Endothelial cell of umbilical vein (primary cell): ENCODE measurements at regions of chr17 and their contacts with region 1.

Region 1: DNA sequence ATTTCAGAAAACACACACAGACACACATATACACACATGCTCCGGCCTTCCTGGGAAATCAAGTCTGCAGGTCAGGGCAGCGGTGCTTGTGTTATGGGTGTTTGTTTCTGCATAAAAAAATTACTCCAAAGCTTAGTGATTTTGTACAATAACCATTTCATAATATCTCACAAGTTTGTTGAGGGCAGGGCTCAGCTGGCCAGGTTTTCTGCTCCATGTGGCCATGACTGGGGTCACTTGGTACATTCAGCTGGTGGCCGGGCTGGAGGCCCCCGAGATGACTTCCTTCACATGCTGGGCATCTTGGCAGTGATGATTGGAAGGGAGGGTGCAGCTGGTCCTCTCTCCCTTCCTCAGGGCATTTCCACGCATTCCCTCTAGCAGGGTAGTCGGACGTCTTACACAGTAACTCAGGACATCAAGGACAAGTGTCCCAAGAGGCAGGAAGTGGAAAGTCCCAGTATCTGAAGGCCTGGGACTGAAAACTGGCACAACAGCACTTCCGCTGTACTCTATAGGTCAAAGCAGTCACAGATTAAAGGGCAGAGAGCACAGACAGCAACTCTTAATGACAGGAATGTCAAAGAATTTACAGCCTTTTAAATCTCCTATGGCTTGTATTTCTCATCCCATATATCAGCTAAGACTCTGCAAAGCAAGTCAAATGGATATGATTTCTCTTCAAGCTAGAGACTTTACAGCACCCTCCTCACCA is 127.4 kb downstream of the ZNF18 start:
- DNase-seq: no peak
- H3K4me3 ChIP-seq: no peak overlapping the region
- H3K27ac ChIP-seq: no peak overlapping the region
- H3K4me1 ChIP-seq: no peaks in the 10 kb centered on the region
- H3K27me3 ChIP-seq: no peaks in the 10 kb centered on the region
- CTCF ChIP-seq: no peak
- POLR2A ChIP-seq: no peak

Region 2: GRCh38 chr17:11074451-11074850 is 795.4 kb before region 1 on chr17:
- CTCF ChIA-PET with region 1: no interaction called
- POLR2A ChIA-PET with region 1: no interaction called
- dilution Hi-C with region 1: no loop called
- intact Hi-C with region 1: loop called (anchors 5 kb)
- DNase-seq: no peak
- H3K4me3 ChIP-seq: no peak overlapping the region
- H3K27ac ChIP-seq: no peak overlapping the region
- H3K4me1 ChIP-seq: no peaks in the 10 kb centered on the region
- H3K27me3 ChIP-seq: no peaks in the 10 kb centered on the region
- CTCF ChIP-seq: no peak
- POLR2A ChIP-seq: no peak

Region 3: GRCh38 chr17:11682646-11683045 is 187.2 kb before region 1 on chr17:
- CTCF ChIA-PET with region 1: no interaction called
- POLR2A ChIA-PET with region 1: no interaction called
- dilution Hi-C with region 1: no loop called
- intact Hi-C with region 1: no loop called
- DNase-seq: no peak
- H3K4me3 ChIP-seq: no peak overlapping the region
- H3K27ac ChIP-seq: no peak overlapping the region
- H3K4me1 ChIP-seq: no peaks in the 10 kb centered on the region
- H3K27me3 ChIP-seq: no peaks in the 10 kb centered on the region
- CTCF ChIP-seq: no peak
- POLR2A ChIP-seq: no peak